Adrenal gland (tissue), 19 donors: ENCODE measurements at regions of chrX and their contacts with region 1.

Region 1: GRCh38 chrX:1649621-1650020 is 34.8 kb downstream of the ASMT start:
- DNase-seq: no peak
- H3K4me3 ChIP-seq: no peak overlapping the region
- H3K27ac ChIP-seq: no peak overlapping the region
- H3K4me1 ChIP-seq: no peaks in the 10 kb centered on the region
- H3K27me3 ChIP-seq: no peaks in the 10 kb centered on the region
- CTCF ChIP-seq: no peak
- POLR2A ChIP-seq: no peak

Region 2: DNA sequence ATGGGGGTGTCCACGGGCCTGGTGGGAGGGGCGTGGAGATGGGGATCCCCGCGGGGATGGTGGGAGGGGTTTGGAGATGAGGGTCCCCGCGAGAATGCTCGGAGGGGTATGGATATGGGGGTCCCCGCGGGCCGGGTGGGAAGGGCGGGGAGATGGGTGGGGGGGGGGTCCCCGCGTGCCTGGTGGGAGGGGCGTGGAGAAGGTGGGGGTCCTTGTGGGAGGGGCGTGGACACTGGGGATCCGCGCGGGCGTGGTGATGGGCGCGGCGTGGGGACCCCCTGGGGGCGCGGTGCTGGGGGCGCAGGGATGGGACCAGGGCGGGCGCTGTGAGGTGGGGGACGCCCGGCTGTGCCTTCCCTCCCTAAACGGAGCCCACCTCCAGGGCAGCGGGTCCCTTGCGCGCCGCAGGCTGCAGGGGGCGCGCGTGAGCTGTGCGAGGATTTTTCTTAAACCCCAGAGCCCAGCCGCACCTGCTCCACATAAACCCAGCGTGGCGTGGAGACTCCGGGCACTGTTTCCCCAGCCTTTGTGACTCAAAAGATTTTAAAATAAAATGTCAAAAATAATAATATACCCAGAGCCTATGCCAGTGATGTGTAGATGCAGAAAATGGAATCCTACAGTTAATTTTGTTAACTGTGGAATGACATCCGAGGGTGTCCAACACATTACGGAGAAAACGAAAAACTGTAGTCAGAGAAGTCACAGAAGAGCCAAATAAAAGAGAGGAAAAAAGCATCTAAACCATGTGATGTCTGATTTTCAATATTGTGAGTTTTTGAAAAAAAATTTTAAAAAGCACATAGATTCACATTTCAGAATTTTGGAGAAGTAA is 195.5 kb before region 1 on chrX:
- intact Hi-C with region 1: loop called in 1 of 2 experiments (anchors 5 kb)
- DNase-seq: peak; percentile 79 to 94 (median 89)
- H3K4me3 ChIP-seq: peak overlapping the region in 1 of 4 donors; percentile 73
- H3K27ac ChIP-seq: peak overlapping the region in 1 of 5 donors; percentile 100
- H3K4me1 ChIP-seq: peaks cover 8 to 10% of the 10 kb centered on the region in 2 donors
- H3K27me3 ChIP-seq: no peaks in the 10 kb centered on the region
- CTCF ChIP-seq: peak; percentile 93 to 97 (median 96)
- POLR2A ChIP-seq: no peak

Region 3: GRCh38 chrX:2589186-2590030 is 939.8 kb after region 1 on chrX:
- intact Hi-C with region 1: loop called in 1 of 2 experiments (anchors 5 kb)
- DNase-seq: no peak
- H3K4me3 ChIP-seq: no peak overlapping the region
- H3K27ac ChIP-seq: no peak overlapping the region
- H3K4me1 ChIP-seq: no peaks in the 10 kb centered on the region
- H3K27me3 ChIP-seq: peaks cover 12% of the 10 kb centered on the region
- CTCF ChIP-seq: no peak
- POLR2A ChIP-seq: no peak

Region 4: DNA sequence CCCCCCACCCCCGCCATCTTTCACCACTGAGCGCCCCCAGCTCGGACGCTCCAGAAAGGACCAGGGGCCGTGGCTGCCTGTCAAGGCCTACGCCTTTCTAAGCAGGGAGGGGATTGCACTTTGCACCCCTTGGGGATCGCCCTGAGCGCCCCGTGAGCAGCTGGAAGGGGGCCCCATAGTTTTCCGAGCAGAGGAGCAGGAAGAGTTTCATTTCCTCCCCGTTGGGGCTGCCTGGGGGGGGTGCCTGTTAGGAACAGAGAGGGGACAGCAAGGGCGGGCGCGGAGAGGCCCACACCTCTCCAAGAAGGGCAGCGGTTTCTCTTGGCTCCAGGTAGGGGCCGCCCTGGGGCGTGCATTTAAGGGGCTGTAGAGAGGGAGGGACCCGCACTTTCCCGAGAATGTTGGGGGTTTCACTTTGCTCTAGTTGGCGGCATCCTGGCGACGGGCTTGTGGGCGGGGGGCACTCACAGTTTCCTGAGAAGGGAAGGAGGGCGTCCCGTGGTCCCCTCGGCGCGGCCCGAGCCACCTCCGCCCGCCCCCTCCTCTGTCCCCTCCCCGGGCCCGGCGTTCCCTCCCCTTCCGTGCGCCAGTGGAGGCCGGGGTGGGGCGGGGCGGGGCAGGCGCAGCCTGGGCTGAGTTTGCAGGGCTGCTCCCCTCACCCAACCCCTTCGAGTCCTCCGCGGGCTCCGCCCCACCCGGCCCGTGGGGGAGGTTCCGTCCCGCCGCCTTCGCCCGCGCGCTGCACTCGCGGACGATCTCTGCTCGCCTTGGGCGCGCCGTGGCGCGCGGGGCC is 959.2 kb after region 1 on chrX:
- intact Hi-C with region 1: loop called in 1 of 2 experiments (anchors 10 kb)
- DNase-seq: peak; percentile 78 to 89 (median 84)
- H3K4me3 ChIP-seq: peak overlapping the region; percentile 68 to 92 (median 72)
- H3K27ac ChIP-seq: peak overlapping the region; percentile 39 to 87 (median 64)
- H3K4me1 ChIP-seq: no peaks in the 10 kb centered on the region
- H3K27me3 ChIP-seq: no peaks in the 10 kb centered on the region
- CTCF ChIP-seq: no peak
- POLR2A ChIP-seq: peak in 1 of 2 donors; percentile 31